Dorsolateral prefrontal cortex (tissue), 120 donors: ENCODE measurements at regions of chr12 and their contacts with region 1.

Region 1: DNA sequence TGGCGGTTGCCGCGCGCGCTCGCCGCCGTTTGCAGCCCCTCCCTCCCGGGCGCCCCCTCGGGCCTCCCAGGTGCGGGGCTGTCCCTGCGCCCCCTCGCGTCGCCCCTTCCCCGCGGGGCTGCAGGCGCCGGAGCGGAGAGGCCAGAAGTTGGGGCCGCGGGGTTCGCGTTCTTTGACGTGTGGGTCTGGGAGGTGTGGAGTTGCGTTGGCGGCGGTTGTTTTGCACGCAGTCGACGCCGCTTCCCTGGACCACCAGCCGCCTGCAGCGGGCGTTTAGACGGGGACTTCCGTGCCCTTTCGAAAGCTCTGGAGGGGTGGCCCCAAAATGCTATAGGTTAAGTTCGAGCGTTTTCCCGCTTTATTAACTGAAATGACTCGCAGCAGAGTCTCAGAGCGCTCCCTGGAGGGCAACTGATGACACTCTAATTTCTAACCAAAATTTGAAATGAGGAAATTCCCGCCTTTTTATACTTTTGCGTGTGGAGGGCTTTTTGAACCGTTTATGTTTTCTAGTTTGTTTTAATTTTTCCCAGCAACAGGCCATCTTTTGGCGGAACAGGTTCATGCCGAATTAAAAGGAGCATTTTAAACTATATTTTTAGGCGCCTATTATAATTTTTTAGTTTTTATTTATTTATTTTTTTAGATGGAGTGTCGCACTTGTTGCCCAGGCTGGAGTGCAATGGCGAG is 939 bp downstream of the TMPO start:
- DNase-seq: peak; percentile 38 to 74 (median 66)
- H3K4me3 ChIP-seq: peak overlapping the region; percentile 71 to 98 (median 91)
- H3K27ac ChIP-seq: peak overlapping the region; percentile 69 to 99 (median 96)
- H3K27me3 ChIP-seq: no peaks in the 10 kb centered on the region
- CTCF ChIP-seq: peak; percentile 55 to 87 (median 77)

Region 2: GRCh38 chr12:98424726-98425401 is 91.5 kb before region 1 on chr12:
- intact Hi-C with region 1: loop called (anchors 2 to 5 kb)
- DNase-seq: peak in 9 of 10 donors; percentile 38 to 77 (median 63)
- H3K4me3 ChIP-seq: peak overlapping the region in 1 of 59 donors; percentile 17
- H3K27ac ChIP-seq: no peak overlapping the region
- H3K27me3 ChIP-seq: no peaks in the 10 kb centered on the region
- CTCF ChIP-seq: peak; percentile 53 to 84 (median 73)

Region 3: DNA sequence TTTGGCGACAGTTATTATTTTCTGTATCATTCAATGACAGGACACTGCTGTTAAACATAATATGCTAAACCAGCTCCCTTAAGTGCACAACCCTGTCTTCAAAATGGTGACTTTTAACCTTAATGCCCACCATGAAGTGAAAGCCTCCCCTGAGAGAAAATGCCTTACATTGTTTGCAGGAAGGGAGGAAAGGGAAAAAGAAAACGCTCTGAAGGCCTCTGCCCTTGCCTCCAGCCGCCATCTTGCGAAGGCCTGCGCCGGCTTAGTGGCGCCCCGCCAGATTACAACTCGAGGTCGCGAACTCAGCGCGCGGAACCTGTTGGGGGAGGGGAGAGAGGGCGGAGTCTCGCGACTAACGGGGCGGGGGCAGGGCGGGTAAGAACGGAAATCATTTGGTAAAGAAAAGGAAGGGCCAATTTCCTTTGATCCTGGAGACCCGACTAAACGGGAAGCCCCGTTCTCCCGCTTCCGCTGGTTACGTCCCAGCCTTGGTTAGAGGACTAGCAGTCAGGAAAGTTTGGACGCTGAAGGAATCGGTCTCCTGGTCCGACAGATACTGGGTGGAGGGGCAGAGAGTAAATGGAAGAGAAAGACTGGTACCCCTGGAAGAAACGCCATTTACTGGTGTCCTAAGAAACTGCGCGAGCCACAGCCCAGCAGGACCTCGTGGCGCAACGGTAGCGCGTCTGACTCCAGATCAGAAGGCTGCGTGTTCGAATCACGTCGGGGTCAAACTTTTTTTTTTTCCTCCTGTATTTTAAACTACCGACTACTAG is 12.5 kb before region 1 on chr12:
- intact Hi-C with region 1: loop called (anchors 1 kb)
- DNase-seq: peak; percentile 77 to 93 (median 88)
- H3K4me3 ChIP-seq: peak overlapping the region; percentile 48 to 93 (median 80)
- H3K27ac ChIP-seq: peak overlapping the region; percentile 94 to 100 (median 99)
- H3K27me3 ChIP-seq: no peaks in the 10 kb centered on the region
- CTCF ChIP-seq: peak in 15 of 56 donors; percentile 1 to 48 (median 13)

Region 4: DNA sequence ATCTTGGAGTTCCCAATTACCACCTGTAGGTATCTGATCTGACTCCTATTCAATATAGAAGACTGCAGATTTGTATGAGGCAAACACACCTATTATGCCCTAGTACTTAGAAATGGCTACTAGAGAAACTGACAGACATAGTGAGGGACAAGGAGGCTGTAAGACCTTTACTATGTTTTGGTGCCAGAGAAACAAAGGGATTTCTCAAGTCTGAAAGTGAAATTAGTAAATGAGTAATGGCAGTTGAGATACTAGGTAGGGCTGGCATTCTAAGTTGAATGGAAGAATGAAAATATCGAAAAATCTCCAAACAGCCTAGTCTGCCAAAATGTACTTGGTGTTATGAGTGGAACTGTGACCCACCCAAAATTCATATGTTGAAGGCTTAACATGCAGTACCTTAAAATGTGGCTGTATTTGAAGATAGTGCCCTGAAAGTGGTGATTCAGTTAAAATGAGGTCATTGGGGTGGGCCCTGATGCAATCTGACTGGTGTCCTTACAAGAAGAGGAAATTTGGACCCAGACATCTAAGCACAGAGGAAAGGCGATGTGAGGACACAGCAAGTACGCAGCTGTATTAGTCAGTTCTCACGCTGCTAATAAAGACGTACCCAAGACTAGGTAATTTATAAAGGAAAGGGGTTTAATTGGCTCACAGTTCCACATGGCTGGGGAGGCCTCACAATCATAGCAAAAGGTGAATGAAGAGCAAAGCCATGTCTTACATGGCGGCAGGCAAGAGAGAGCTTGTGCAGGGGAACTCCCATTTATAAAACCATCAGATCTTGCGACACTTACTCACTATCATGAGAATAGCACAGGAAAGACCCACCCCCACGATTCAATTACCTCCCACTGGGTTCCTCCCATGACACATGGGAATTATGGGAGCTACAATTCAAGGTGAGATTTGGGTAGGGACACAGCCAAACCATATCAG is 255.8 kb after region 1 on chr12:
- intact Hi-C with region 1: no loop called
- DNase-seq: no peak
- H3K4me3 ChIP-seq: no peak overlapping the region
- H3K27ac ChIP-seq: peak overlapping the region in 5 of 59 donors; percentile 7 to 61 (median 28)
- H3K27me3 ChIP-seq: no peaks in the 10 kb centered on the region
- CTCF ChIP-seq: no peak